Caco-2 (cell line): ENCODE measurements at regions of chr9 and their contacts with region 1.

Region 1: GRCh38 chr9:37422289-37423104 is at the start of gene GRHPR:
- DNase-seq: peak; percentile 91 to 94
- H3K4me3 ChIP-seq: peak within 1 kb of the TSS; percentile 92
- H3K4me3 Mint-ChIP-seq: peak within 1 kb of the TSS; percentile 86
- H3K27ac Mint-ChIP-seq: peak within 1 kb of the TSS; percentile 96
- H3K4me1 ChIP-seq: peaks cover 28% of the 10 kb centered on the region; the same call in 1 of the 2 replicates
- H3K4me1 Mint-ChIP-seq: peaks cover 20% of the 10 kb centered on the region
- H3K27me3 ChIP-seq: no peaks in the 10 kb centered on the region
- H3K27me3 Mint-ChIP-seq: no peaks in the 10 kb centered on the region
- CTCF ChIP-seq: no peak
- total RNA-seq, gene GRHPR: 76.9 and 82.5 TPM in 2 replicates

Region 2: DNA sequence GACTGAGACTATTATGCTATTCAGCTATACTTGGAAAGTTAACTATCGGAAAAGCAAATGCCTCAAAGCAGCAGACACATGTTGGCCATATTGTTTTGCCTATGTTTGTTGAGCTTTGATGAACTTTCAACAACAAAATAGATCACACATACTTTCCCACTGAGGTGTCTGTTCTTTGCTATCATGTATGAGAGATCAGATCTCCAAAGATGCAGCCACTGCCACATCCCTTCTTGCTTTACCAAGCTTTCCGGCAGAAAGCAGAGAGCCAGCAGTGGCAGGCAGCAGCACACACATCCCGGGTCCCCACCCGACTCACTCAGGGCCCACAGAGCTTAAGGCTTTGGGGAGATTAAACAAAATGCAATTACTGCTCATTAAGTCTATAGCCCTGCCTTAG is 23.9 kb after region 1 on chr9:
- CTCF ChIA-PET with region 1: no interaction called
- POLR2A ChIA-PET with region 1: no interaction called
- intact Hi-C with region 1: no loop called
- DNase-seq: no peak
- H3K4me3 ChIP-seq: no peak overlapping the region
- H3K4me3 Mint-ChIP-seq: no peak overlapping the region
- H3K27ac Mint-ChIP-seq: no peak overlapping the region
- H3K4me1 ChIP-seq: peaks cover 13% of the 10 kb centered on the region
- H3K4me1 Mint-ChIP-seq: peaks cover 10% of the 10 kb centered on the region
- H3K27me3 ChIP-seq: no peaks in the 10 kb centered on the region
- H3K27me3 Mint-ChIP-seq: no peaks in the 10 kb centered on the region
- CTCF ChIP-seq: no peak

Region 3: GRCh38 chr9:37465249-37466036 is 42.9 kb after region 1 on chr9 and contains the start of gene ZBTB5:
- CTCF ChIA-PET with region 1: interaction called, 3 read pairs
- POLR2A ChIA-PET with region 1: interaction called, 9 read pairs
- intact Hi-C with region 1: loop called (anchors 2 kb)
- DNase-seq: peak; percentile 99
- H3K4me3 ChIP-seq: peak within 1 kb of the TSS; percentile 89
- H3K4me3 Mint-ChIP-seq: peak within 1 kb of the TSS; percentile 95
- H3K27ac Mint-ChIP-seq: peak within 1 kb of the TSS; percentile 96
- H3K4me1 ChIP-seq: peaks cover 12% of the 10 kb centered on the region
- H3K4me1 Mint-ChIP-seq: peaks cover 21% of the 10 kb centered on the region
- H3K27me3 ChIP-seq: no peaks in the 10 kb centered on the region
- H3K27me3 Mint-ChIP-seq: no peaks in the 10 kb centered on the region
- CTCF ChIP-seq: no peak
- total RNA-seq, gene ZBTB5: 12.5 and 13.2 TPM in 2 replicates

Region 4: DNA sequence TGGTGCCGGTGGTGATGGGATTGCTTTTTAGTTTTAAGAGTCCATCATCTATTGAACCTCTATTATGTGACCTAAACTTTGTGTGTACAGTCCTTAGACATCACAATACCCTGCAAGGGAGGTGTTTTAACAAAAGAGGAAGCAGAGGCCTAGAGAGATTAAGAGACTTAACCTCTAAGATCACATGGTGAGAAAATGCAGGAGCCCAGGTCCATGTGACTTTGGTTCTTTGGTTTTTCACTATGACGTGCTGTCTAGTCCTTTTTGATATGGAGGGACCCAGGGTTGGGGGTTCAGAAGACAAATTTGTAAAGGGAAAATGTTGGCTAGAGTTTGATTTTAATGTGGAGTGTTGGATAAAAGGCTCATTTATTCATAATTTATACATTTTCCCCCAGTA is 297.0 kb after region 1 on chr9:
- CTCF ChIA-PET with region 1: no interaction called
- POLR2A ChIA-PET with region 1: no interaction called
- intact Hi-C with region 1: no loop called
- DNase-seq: no peak
- H3K4me3 ChIP-seq: no peak overlapping the region
- H3K4me3 Mint-ChIP-seq: no peak overlapping the region
- H3K27ac Mint-ChIP-seq: no peak overlapping the region
- H3K4me1 ChIP-seq: no peaks in the 10 kb centered on the region; the same call in none of the 2 replicates
- H3K4me1 Mint-ChIP-seq: peaks cover 6% of the 10 kb centered on the region
- H3K27me3 ChIP-seq: no peaks in the 10 kb centered on the region
- H3K27me3 Mint-ChIP-seq: peaks cover 10% of the 10 kb centered on the region
- CTCF ChIP-seq: no peak

Region 5: DNA sequence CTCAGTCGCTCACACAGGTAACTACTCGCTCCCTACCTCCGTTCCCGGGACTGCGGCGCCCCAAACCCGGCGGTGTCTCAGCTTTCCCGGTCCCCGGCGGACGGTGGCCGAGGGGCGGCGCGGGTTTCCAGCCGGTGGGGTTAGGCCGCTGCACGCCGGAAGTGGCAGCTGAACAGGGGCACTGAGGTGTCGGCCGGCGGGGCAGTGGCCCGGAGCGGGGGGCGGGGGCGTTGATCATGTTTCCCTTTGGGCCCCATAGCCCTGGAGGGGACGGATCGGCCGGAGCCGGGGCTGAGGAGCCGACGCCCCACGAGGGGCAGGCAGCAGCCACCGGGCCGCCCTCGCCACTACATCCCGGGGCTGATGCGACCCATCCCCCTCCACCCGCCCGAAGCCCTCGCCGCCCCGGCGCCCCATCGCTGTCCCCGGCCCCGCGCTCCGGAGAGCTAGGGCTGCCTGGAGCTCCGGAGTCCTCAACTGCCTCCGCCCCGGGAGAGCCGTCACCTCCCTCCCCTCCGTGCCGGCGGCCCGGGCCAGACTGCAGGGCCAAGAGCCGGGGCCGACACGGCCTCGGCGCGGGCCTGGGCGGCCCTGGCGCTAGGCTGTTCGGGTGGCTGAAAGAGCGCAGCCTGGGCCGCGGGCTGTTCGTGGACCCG is 378.3 kb after region 1 on chr9 and contains the start of gene DCAF10:
- CTCF ChIA-PET with region 1: no interaction called
- POLR2A ChIA-PET with region 1: no interaction called
- intact Hi-C with region 1: no loop called
- DNase-seq: peak; percentile 90 to 96
- H3K4me3 ChIP-seq: peak within 1 kb of the TSS; percentile 100
- H3K4me3 Mint-ChIP-seq: peak within 1 kb of the TSS; percentile 91
- H3K27ac Mint-ChIP-seq: peak within 1 kb of the TSS; percentile 81
- H3K4me1 ChIP-seq: no peaks in the 10 kb centered on the region; the same call in 1 of the 2 replicates
- H3K4me1 Mint-ChIP-seq: peaks cover 18% of the 10 kb centered on the region
- H3K27me3 ChIP-seq: no peaks in the 10 kb centered on the region
- H3K27me3 Mint-ChIP-seq: no peaks in the 10 kb centered on the region
- CTCF ChIP-seq: no peak
- total RNA-seq, gene DCAF10: 11.4 and 13.5 TPM in 2 replicates

Region 6: DNA sequence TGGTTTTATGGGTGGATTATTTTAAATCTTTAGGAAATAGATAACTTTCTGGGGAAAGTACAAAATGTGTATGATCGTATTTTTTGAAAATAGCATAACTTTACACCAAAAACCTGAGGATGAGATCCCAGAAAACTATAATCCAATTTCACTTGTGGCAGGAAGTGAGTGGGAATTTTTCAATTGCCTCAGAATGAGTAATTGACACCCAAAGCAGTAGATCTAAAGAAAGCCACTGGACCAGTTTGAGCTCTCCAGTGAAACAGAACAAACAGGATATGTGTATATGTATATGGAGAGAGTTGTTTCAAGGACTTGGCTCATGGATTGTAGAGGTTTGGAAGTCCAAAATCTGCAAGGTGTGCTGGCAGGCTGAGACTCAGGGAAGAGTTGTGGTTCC is 755.7 kb after region 1 on chr9:
- CTCF ChIA-PET with region 1: no interaction called
- POLR2A ChIA-PET with region 1: no interaction called
- intact Hi-C with region 1: no loop called
- DNase-seq: no peak
- H3K4me3 ChIP-seq: no peak overlapping the region
- H3K4me3 Mint-ChIP-seq: no peak overlapping the region
- H3K27ac Mint-ChIP-seq: no peak overlapping the region
- H3K4me1 ChIP-seq: no peaks in the 10 kb centered on the region
- H3K4me1 Mint-ChIP-seq: no peaks in the 10 kb centered on the region
- H3K27me3 ChIP-seq: no peaks in the 10 kb centered on the region
- H3K27me3 Mint-ChIP-seq: no peaks in the 10 kb centered on the region
- CTCF ChIP-seq: no peak